ENCODE measurements at regions of chr10 and their contacts with region 1.

Region 1: GRCh38 chr10:92760609-92761008 is 70.9 kb downstream of the HHEX start:
- DNase-seq: no peak
- ATAC-seq: peak; percentile 60; the same call in 1 of the 2 replicates
- H3K4me3 ChIP-seq: no peak overlapping the region
- H3K27ac ChIP-seq: no peak overlapping the region
- H3K4me1 ChIP-seq: peaks cover 3% of the 10 kb centered on the region; the same call in 1 of the 2 replicates
- H3K27me3 ChIP-seq: no peaks in the 10 kb centered on the region
- CTCF ChIP-seq: no peak

Region 2: GRCh38 chr10:92440578-92440977 is 320.0 kb before region 1 on chr10:
- CTCF ChIA-PET with region 1: no interaction called
- POLR2A ChIA-PET with region 1: no interaction called
- in situ Hi-C with region 1: no loop called
- intact Hi-C with region 1: no loop called
- DNase-seq: no peak
- ATAC-seq: no peak
- H3K4me3 ChIP-seq: no peak overlapping the region
- H3K27ac ChIP-seq: no peak overlapping the region
- H3K4me1 ChIP-seq: no peaks in the 10 kb centered on the region
- H3K27me3 ChIP-seq: no peaks in the 10 kb centered on the region
- CTCF ChIP-seq: no peak

Region 3: GRCh38 chr10:92886334-92886961 is 125.8 kb after region 1 on chr10:
- CTCF ChIA-PET with region 1: interaction called, 12 read pairs
- POLR2A ChIA-PET with region 1: interaction called, 4 read pairs
- in situ Hi-C with region 1: no loop called
- intact Hi-C with region 1: no loop called
- DNase-seq: no peak
- ATAC-seq: peak; percentile 65
- H3K4me3 ChIP-seq: no peak overlapping the region
- H3K27ac ChIP-seq: 0 out of 2 replicates have a peak overlapping the region, but pooled peaks have one; percentile 12
- H3K4me1 ChIP-seq: peaks cover 14% of the 10 kb centered on the region
- H3K27me3 ChIP-seq: no peaks in the 10 kb centered on the region
- CTCF ChIP-seq: no peak

Measured in Panc1 (cell line).